B cell (primary cell): ENCODE measurements at regions of chr3 and their contacts with region 1.

Region 1: DNA sequence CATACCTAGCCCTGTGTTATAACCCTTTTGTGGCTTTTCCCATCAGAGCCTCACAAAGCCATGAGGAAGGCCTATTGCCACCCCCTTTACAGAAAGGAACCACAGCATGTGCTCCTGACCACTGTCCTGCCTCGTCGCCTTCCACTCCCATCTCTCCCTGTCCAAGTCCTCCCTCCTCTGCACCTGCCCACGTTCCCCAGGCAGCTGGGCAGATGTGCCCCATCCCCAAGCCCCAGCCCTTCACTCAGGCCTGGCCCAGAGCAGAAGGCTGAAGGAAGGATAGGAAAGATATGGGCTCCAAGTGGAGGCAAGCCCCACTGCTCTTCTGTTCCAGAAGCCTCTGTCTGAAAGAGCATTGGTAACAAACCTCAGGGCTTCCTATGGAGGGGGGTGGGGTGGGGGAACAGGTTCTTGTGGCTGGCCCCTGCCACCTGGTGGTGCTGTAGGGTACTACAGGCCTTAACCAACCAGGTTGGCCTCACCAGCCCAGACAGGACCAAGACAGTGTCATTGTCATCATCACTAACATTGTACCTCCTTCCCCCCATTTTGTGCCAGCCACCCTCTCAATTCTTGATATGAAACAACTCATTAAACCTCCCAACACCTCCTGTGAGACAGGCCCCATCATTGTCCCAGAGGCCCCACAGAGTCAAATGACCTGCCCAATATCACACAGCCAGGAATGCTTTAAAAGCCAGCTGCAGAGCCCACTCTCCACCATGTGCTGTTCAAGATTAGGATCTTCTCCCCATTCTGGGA is 10.0 kb downstream of the POC1A start:
- DNase-seq: peak; percentile 89
- ATAC-seq: peak; percentile 99
- H3K4me3 ChIP-seq: no peak overlapping the region
- H3K4me3 Mint-ChIP-seq: no peak overlapping the region
- H3K27ac ChIP-seq: no peak overlapping the region
- H3K27ac Mint-ChIP-seq: no peak overlapping the region
- H3K4me1 ChIP-seq: peaks cover 4 to 5% of the 10 kb centered on the region in 2 donors
- H3K4me1 Mint-ChIP-seq: peaks cover 5% of the 10 kb centered on the region
- H3K27me3 ChIP-seq: no peaks in the 10 kb centered on the region
- H3K27me3 Mint-ChIP-seq: no peaks in the 10 kb centered on the region
- CTCF ChIP-seq: peak; percentile 93

Region 2: GRCh38 chr3:52001443-52001974 is 142.7 kb before region 1 on chr3:
- CTCF ChIA-PET with region 1: interaction called, 166 read pairs
- POLR2A ChIA-PET with region 1: no interaction called
- intact Hi-C with region 1: no loop called
- DNase-seq: peak; percentile 91
- ATAC-seq: peak; percentile 99
- H3K4me3 ChIP-seq: no peak overlapping the region
- H3K4me3 Mint-ChIP-seq: no peak overlapping the region
- H3K27ac ChIP-seq: no peak overlapping the region
- H3K27ac Mint-ChIP-seq: peak overlapping the region; percentile 37
- H3K4me1 ChIP-seq: peaks cover 6 to 13% of the 10 kb centered on the region in 2 donors
- H3K4me1 Mint-ChIP-seq: peaks cover 5% of the 10 kb centered on the region
- H3K27me3 ChIP-seq: no peaks in the 10 kb centered on the region
- H3K27me3 Mint-ChIP-seq: peaks cover 6% of the 10 kb centered on the region
- CTCF ChIP-seq: peak; percentile 90

Region 3: DNA sequence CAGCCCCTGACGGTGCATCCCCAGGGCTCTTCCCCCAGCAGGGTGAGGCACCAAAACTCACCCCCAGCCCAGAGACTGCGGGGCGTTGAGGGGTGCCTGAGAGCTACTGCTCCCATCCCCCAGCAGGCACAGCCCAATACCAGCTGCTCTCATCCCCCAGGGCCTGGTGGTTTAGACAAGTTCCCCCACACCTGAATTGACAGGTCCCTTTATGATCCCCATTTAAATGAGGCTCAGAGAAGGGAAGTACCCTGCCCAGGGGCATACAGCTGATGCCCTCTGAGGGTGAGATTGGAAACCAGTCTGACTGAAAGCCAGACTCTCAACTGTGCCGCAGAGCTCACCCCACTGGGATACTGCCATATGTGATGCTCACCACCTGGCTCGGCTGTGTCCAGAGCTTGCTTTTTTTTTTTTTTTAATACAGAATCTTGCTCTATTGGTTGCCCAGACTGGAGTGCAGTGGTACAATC is 108.0 kb before region 1 on chr3:
- CTCF ChIA-PET with region 1: interaction called, 14 read pairs
- POLR2A ChIA-PET with region 1: no interaction called
- intact Hi-C with region 1: no loop called
- DNase-seq: no peak
- ATAC-seq: peak; percentile 45
- H3K4me3 ChIP-seq: no peak overlapping the region
- H3K4me3 Mint-ChIP-seq: no peak overlapping the region
- H3K27ac ChIP-seq: no peak overlapping the region
- H3K27ac Mint-ChIP-seq: no peak overlapping the region
- H3K4me1 ChIP-seq: peaks cover 0 to 10% of the 10 kb centered on the region in 2 donors
- H3K4me1 Mint-ChIP-seq: peaks cover 5% of the 10 kb centered on the region
- H3K27me3 ChIP-seq: peaks cover 0 to 5% (median 3%) of the 10 kb centered on the region in 4 experiments
- H3K27me3 Mint-ChIP-seq: peaks cover 3% of the 10 kb centered on the region
- CTCF ChIP-seq: no peak

Region 4: DNA sequence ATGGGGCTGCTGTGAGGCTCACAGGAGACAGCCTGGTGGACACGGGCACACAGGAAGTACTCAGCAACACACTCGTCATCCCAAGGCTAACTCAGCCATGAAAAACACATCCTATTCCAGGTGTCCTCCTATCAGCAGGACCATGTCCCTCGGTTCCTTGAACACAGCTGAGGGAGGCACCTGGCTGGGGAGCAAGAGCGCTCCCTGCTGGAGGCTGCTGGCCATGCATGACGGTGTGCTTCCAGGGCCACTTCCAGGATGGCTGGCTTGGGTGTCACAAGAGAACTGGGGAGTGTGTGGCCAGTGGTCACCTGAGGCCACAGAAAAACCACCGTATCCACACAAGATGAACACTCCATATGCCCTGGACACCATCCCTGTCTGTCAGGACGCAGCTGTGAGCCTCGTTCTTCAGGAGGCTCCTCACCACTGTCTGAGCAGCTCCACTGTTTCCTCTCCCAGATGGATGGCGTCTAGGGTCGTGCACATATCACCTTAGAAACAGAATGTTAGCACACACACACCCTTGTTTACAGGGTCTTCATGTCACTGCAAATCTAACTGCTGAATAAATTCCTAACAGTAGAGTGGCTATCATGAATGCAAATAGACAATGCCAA is 21.0 kb before region 1 on chr3:
- CTCF ChIA-PET with region 1: interaction called, 9 read pairs
- POLR2A ChIA-PET with region 1: no interaction called
- intact Hi-C with region 1: loop called (anchors 2 kb)
- DNase-seq: peak; percentile 76
- ATAC-seq: peak; percentile 73
- H3K4me3 ChIP-seq: peak overlapping the region in 1 of 5 experiments; percentile 27
- H3K4me3 Mint-ChIP-seq: no peak overlapping the region
- H3K27ac ChIP-seq: peak overlapping the region; percentile 49 to 81
- H3K27ac Mint-ChIP-seq: peak overlapping the region; percentile 90
- H3K4me1 ChIP-seq: peaks cover 34 to 35% of the 10 kb centered on the region in 2 donors
- H3K4me1 Mint-ChIP-seq: peaks cover 33% of the 10 kb centered on the region
- H3K27me3 ChIP-seq: no peaks in the 10 kb centered on the region
- H3K27me3 Mint-ChIP-seq: no peaks in the 10 kb centered on the region
- CTCF ChIP-seq: peak; percentile 84

Region 5: DNA sequence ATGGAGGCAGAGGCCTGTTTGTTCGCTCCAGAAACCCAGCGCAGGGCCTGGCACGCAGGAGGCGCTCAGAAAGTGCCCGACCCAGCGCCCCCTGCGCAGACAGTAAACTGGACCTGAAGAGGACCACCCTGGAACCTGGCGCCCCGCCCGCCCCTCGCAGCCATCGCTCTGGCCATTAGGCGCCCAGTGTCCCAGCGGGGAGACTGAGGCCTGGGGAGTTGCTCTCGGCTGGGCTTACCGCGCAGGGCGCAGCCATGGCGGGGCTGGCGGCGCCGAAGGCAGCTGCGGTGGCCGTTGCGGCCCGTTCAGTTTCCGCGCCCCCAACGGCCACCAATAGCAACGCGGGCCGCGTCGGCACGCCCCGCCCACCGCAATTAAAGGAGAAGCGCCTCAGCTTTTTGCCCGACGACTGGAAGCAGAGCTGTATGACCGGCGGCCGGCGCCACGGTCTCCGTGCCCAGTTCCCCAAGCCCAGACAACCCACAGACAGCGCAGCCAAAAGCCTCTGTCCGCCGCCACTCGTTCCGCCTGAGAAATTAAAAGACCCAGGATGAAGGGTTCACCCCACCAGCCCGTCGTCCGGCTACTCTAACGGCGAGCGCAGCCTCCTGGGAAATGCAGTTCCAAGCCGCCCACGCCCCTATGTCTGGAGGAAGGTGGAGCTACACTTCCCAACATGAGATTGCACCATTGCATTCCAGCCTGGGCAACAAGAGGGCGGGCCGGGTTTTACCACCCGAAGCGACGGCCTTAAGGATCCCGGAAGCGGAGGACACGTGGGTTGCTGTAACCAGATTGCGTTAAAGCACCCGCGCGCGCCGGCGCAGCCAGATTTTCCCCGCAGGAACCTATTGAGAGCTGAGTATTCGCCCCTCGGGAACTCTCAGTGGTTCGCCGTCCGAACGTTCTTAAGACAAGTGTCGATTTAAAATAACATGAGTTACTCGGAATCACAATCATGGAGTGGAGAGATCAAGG is 10.2 kb after region 1 on chr3 and contains the start of gene POC1A:
- CTCF ChIA-PET with region 1: interaction called, 14 read pairs
- POLR2A ChIA-PET with region 1: no interaction called
- intact Hi-C with region 1: no loop called
- DNase-seq: peak; percentile 91
- ATAC-seq: peak; percentile 85
- H3K4me3 ChIP-seq: peak within 1 kb of the TSS; percentile 73 to 93 (median 92)
- H3K4me3 Mint-ChIP-seq: peak within 1 kb of the TSS; percentile 98
- H3K27ac ChIP-seq: peak within 1 kb of the TSS; percentile 79 to 81
- H3K27ac Mint-ChIP-seq: peak within 1 kb of the TSS; percentile 98
- H3K4me1 ChIP-seq: peaks cover 4 to 15% of the 10 kb centered on the region in 2 donors
- H3K4me1 Mint-ChIP-seq: peaks cover 14% of the 10 kb centered on the region
- H3K27me3 ChIP-seq: no peaks in the 10 kb centered on the region
- H3K27me3 Mint-ChIP-seq: no peaks in the 10 kb centered on the region
- CTCF ChIP-seq: peak; percentile 13
- total RNA-seq, gene POC1A: 2.4 and 2.8 TPM in 2 replicates